Dorsolateral prefrontal cortex (tissue), 120 donors: ENCODE measurements at regions of chr4 and their contacts with region 1.

Region 1: DNA sequence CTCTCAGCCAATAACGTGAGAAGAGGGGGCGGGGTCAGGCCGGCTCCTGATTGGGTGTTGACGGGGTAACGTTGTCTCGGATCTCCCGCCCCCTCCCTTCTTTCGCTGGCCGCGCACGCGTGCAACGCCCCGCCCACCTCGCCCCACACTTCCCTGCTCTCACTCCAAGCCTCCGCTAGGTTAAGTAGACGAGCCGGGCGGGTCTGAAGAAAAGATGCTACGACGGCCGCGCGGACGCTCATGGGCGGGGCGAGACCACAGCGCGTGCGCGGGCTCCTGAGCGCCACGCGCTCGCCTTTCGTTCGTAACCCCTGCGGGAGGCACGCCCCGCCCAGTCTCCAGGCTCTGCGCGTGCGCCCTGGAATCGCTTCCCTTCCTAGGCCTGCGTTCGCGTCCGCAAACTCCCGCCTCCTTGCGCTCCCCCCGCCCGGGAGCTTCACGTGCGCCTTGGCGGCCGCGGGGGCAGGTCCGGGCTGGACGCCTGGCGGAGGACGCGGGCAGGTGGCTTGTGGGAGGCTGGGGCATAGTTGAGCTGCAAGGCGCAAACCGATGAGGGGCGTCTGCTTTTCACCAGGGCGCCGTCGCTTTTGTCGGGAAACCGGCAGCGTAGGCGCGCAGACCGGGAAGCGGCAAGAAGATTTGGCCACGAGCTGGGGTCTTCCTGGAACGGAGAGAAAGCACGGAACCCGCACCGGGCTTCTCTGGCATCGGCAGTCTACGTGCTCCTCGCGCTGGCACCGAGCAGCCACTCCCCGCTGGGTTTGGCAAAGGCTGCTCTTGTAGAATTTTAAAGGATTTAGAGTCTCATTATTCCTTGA is 467 bp upstream of the PGRMC2 start:
- DNase-seq: peak; percentile 97 to 98 (median 98)
- H3K4me3 ChIP-seq: peak overlapping the region; percentile 71 to 99 (median 85)
- H3K27ac ChIP-seq: peak overlapping the region; percentile 67 to 98 (median 92)
- H3K27me3 ChIP-seq: no peaks in the 10 kb centered on the region
- CTCF ChIP-seq: peak in 39 of 56 donors; percentile 5 to 53 (median 33)

Region 2: GRCh38 chr4:128386761-128387599 is 98.9 kb after region 1 on chr4:
- intact Hi-C with region 1: loop called (anchors 2 to 5 kb)
- DNase-seq: peak; percentile 69 to 93 (median 86)
- H3K4me3 ChIP-seq: peak overlapping the region in 45 of 59 donors; percentile 2 to 51 (median 28)
- H3K27ac ChIP-seq: peak overlapping the region; percentile 48 to 95 (median 84)
- H3K27me3 ChIP-seq: no peaks in the 10 kb centered on the region
- CTCF ChIP-seq: peak in 15 of 56 donors; percentile 8 to 43 (median 23)

Region 3: GRCh38 chr4:128565565-128566186 is 277.6 kb after region 1 on chr4:
- intact Hi-C with region 1: no loop called
- DNase-seq: peak in 5 of 10 donors; percentile 13 to 54 (median 48)
- H3K4me3 ChIP-seq: no peak overlapping the region
- H3K27ac ChIP-seq: no peak overlapping the region
- H3K27me3 ChIP-seq: peaks cover 0 to 3% (median 0%) of the 10 kb centered on the region in 45 donors
- CTCF ChIP-seq: peak in 52 of 56 donors; percentile 21 to 72 (median 49)